CD4-positive, alpha-beta T cell (primary cell): ENCODE measurements at regions of chr1 and their contacts with region 1.

Region 1: GRCh38 chr1:22131875-22132486 is 10.9 kb downstream of the WNT4 start:
- DNase-seq: peak; percentile 20 to 72 (median 42)
- ATAC-seq: peak; percentile 49
- H3K4me3 ChIP-seq: no peak overlapping the region
- H3K4me3 Mint-ChIP-seq: no peak overlapping the region
- H3K27ac ChIP-seq: no peak overlapping the region
- H3K27ac Mint-ChIP-seq: no peak overlapping the region
- H3K4me1 ChIP-seq: peaks cover 3% of the 10 kb centered on the region
- H3K4me1 Mint-ChIP-seq: no peaks in the 10 kb centered on the region
- H3K27me3 ChIP-seq: no peaks in the 10 kb centered on the region
- H3K27me3 Mint-ChIP-seq: peaks cover 7% of the 10 kb centered on the region
- CTCF ChIP-seq: peak; percentile 66

Region 2: GRCh38 chr1:22077728-22078127 is 54.3 kb before region 1 on chr1:
- CTCF ChIA-PET with region 1: no interaction called
- POLR2A ChIA-PET with region 1: no interaction called
- intact Hi-C with region 1: no loop called
- DNase-seq: no peak
- ATAC-seq: no peak
- H3K4me3 ChIP-seq: no peak overlapping the region
- H3K4me3 Mint-ChIP-seq: peak overlapping the region; percentile 21
- H3K27ac ChIP-seq: peak overlapping the region; percentile 20 to 22
- H3K27ac Mint-ChIP-seq: peak overlapping the region; percentile 83
- H3K4me1 ChIP-seq: peaks cover 59% of the 10 kb centered on the region
- H3K4me1 Mint-ChIP-seq: peaks cover 89% of the 10 kb centered on the region
- H3K27me3 ChIP-seq: no peaks in the 10 kb centered on the region
- H3K27me3 Mint-ChIP-seq: no peaks in the 10 kb centered on the region
- CTCF ChIP-seq: no peak

Region 3: DNA sequence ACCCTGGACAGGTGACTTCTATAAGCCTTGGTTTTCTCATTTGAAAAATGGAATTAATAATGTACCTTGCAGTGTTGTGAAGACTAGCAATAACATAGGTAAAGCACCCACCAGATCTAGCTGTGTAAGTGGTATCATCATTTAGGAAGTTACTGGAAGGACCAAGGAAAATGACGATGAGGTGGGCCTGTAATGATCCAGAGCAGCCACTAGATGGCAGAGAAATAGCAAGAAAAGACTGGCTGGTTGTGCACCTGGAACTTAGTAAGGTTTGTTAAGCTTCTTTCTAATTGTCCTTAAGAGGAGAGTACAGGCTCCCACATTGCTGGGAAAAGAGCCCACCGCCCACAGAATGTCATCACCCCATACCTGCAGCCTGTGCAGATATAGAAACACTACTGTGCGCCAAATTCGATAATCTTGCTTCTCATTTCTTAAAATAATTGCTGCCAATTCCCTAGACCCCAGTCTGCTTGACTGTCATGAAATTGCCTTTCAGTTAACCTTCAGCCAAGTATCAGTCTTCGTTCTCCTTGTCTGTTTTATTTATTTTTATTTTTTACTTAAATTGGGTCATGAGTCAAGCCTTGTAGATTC is 26.3 kb before region 1 on chr1:
- CTCF ChIA-PET with region 1: no interaction called
- POLR2A ChIA-PET with region 1: no interaction called
- intact Hi-C with region 1: no loop called
- DNase-seq: peak in 5 of 14 experiments; percentile 16 to 72 (median 61)
- ATAC-seq: peak; percentile 68
- H3K4me3 ChIP-seq: no peak overlapping the region
- H3K4me3 Mint-ChIP-seq: peak overlapping the region; percentile 64
- H3K27ac ChIP-seq: peak overlapping the region in 1 of 2 donors; percentile 8
- H3K27ac Mint-ChIP-seq: peak overlapping the region; percentile 77
- H3K4me1 ChIP-seq: peaks cover 43% of the 10 kb centered on the region
- H3K4me1 Mint-ChIP-seq: peaks cover 74% of the 10 kb centered on the region
- H3K27me3 ChIP-seq: no peaks in the 10 kb centered on the region
- H3K27me3 Mint-ChIP-seq: no peaks in the 10 kb centered on the region
- CTCF ChIP-seq: peak; percentile 85

Region 4: DNA sequence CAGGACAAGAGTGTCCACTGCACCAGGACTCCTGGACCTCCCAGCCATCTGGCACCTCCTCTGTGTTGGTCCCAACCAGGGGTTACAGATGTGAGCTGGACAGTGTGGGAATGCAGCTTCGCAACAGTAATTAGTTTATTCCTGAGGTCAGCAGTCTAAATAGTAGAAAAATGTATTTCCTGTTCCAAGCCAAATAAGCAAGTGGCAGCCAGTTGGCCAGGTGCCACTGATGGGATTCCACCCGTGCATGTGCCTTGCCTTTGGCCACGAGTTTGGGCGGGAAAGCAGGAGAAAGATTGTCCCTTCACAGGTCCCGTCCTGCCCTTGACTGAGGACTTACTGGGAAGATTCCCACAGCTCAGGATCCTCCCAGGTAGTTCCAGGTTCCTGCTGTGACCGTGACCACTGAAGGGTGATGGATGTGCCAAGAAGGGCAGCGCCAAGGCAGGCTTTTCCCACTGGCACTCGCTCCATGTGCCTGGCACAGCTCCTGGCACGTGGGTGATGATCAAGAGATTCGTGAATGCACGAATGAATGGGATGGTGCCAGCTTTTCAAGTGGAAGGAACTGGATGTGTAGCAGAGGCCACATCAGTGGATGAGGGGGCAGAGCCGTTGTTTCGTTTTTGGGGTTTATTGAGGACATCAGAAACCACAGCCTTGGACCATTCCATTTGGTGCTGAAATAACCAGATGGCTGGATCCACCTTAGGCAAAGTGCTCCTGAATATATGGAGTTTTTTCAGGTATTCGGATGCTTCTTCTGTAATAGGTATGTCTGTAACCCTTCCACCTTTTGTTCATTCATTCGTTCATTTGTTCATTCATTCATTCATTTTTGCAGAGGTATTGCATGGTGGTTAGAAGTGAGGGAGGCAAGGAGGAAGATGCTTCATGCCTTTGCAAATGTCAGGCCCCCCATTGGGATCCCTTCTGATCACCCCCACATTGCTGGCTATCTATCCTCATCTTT is 73.2 kb after region 1 on chr1:
- CTCF ChIA-PET with region 1: no interaction called
- POLR2A ChIA-PET with region 1: no interaction called
- intact Hi-C with region 1: no loop called
- DNase-seq: no peak
- ATAC-seq: no peak
- H3K4me3 ChIP-seq: no peak overlapping the region
- H3K4me3 Mint-ChIP-seq: no peak overlapping the region
- H3K27ac ChIP-seq: no peak overlapping the region
- H3K27ac Mint-ChIP-seq: no peak overlapping the region
- H3K4me1 ChIP-seq: no peaks in the 10 kb centered on the region
- H3K4me1 Mint-ChIP-seq: no peaks in the 10 kb centered on the region
- H3K27me3 ChIP-seq: peaks cover 21 to 35% of the 10 kb centered on the region in 2 experiments
- H3K27me3 Mint-ChIP-seq: peaks cover 81% of the 10 kb centered on the region
- CTCF ChIP-seq: no peak

Region 5: GRCh38 chr1:22275721-22276395 is 143.9 kb after region 1 on chr1:
- CTCF ChIA-PET with region 1: no interaction called
- POLR2A ChIA-PET with region 1: no interaction called
- intact Hi-C with region 1: loop called in 1 of 2 experiments (anchors 10 kb)
- DNase-seq: peak in 12 of 14 experiments; percentile 4 to 43 (median 16)
- ATAC-seq: peak; percentile 41
- H3K4me3 ChIP-seq: no peak overlapping the region
- H3K4me3 Mint-ChIP-seq: no peak overlapping the region
- H3K27ac ChIP-seq: no peak overlapping the region
- H3K27ac Mint-ChIP-seq: no peak overlapping the region
- H3K4me1 ChIP-seq: no peaks in the 10 kb centered on the region
- H3K4me1 Mint-ChIP-seq: no peaks in the 10 kb centered on the region
- H3K27me3 ChIP-seq: peaks cover 0 to 3% of the 10 kb centered on the region in 2 experiments
- H3K27me3 Mint-ChIP-seq: peaks cover 24% of the 10 kb centered on the region
- CTCF ChIP-seq: peak; percentile 29

Region 6: DNA sequence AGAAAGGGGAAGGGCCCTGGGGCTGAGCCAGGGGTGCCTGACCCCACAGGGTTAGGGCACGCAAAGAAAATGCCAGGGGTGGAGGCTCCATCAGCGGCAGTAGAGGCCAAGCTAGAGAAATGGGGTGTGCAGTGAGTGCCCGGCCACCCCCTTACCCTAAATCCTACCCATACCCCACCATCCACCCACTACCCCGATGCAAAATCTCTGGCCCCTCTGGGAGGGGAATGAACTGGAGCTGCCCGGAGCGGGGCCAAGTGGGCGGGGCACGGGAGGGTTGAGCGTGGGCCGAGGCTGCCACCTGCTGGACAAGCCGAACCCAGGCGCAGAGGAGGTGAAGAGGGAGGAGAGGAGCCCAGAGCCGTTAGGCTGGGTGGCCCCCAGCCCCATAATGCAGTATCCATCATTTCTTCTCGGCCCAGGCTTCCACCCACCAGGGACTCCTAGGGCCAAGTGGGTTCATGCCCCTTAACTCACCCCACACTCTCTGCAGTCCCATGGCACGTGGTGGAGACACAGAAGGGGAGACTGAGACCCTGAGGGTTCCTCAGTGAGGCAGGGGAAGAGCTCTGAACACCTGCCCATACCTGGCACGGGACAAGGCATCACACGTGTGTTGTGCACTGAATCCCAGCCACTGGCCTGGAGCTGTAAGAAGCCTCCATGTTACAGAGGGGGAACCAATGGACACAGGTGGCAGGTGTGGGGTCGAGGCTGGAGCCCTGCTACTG is 510.1 kb after region 1 on chr1:
- CTCF ChIA-PET with region 1: no interaction called
- POLR2A ChIA-PET with region 1: no interaction called
- intact Hi-C with region 1: loop called (anchors 1 to 2 kb)
- DNase-seq: peak; percentile 41 to 77 (median 60)
- ATAC-seq: peak; percentile 81
- H3K4me3 ChIP-seq: no peak overlapping the region
- H3K4me3 Mint-ChIP-seq: no peak overlapping the region
- H3K27ac ChIP-seq: no peak overlapping the region
- H3K27ac Mint-ChIP-seq: no peak overlapping the region
- H3K4me1 ChIP-seq: peaks cover 8% of the 10 kb centered on the region
- H3K4me1 Mint-ChIP-seq: no peaks in the 10 kb centered on the region
- H3K27me3 ChIP-seq: peaks cover 12 to 20% of the 10 kb centered on the region in 2 experiments
- H3K27me3 Mint-ChIP-seq: peaks cover 30% of the 10 kb centered on the region
- CTCF ChIP-seq: peak; percentile 74

Region 7: DNA sequence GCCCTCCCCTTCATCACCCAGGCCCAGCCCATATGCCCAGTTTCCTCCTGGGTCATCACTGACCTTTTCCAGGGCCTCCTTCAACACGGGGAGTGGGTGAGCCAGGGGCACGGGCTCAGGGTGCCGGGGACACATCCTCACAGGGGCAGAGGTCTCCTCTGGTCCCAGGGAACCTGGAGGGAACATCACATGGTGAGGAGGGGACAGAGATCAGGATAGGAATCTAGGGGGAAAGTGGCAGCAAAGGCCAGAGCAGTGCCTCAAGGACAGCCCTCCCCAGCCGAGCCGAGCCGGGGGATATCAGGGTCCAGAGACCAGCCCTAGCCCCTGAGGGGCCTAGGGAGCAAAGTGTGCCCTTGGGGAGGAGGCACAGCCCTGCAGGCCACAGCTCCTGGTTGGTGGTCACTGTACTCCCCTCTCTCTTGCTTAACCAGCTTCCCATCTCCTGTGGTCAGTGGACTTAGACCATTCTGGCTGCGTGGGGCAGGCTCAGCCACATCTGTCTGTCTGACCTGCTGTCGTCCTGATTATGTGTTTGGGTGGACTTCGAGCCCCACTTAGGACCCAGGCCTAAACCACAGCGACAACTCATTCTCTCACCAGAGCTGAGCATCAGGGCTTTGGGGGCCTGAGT is 831.2 kb after region 1 on chr1:
- CTCF ChIA-PET with region 1: no interaction called
- POLR2A ChIA-PET with region 1: no interaction called
- intact Hi-C with region 1: loop called in 1 of 2 experiments (anchors 5 kb)
- DNase-seq: no peak
- ATAC-seq: no peak
- H3K4me3 ChIP-seq: no peak overlapping the region
- H3K4me3 Mint-ChIP-seq: no peak overlapping the region
- H3K27ac ChIP-seq: no peak overlapping the region
- H3K27ac Mint-ChIP-seq: no peak overlapping the region
- H3K4me1 ChIP-seq: peaks cover 5% of the 10 kb centered on the region
- H3K4me1 Mint-ChIP-seq: no peaks in the 10 kb centered on the region
- H3K27me3 ChIP-seq: peaks cover 0 to 4% of the 10 kb centered on the region in 2 experiments
- H3K27me3 Mint-ChIP-seq: peaks cover 21% of the 10 kb centered on the region
- CTCF ChIP-seq: no peak